ENCODE measurements at regions of chr2 and their contacts with region 1.

Region 1: DNA sequence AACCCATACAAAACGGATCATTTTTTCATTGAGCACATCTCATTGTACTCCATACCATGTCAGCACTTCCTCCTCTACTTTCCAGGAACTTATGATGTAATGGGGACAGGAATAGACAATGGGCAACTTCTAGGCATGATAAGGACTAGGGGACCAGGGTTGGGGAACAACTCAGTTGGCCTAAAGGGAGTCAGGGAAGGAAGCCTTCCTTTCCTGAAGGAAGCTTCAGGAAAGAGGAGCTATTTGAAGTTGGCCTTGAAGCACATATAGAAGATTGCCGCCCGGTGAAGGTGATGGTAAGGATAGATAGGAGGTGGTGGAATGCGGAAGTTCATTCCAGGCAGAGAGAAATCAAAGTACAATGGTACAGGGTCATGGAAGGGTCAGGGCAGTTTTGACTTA is 283.8 kb downstream of the SLC8A1 start:
- DNase-seq: peak; percentile 49 to 55
- H3K4me3 ChIP-seq: no peak overlapping the region
- H3K27ac ChIP-seq: no peak overlapping the region
- H3K4me1 ChIP-seq: 0 out of 2 replicates have a peak, but pooled peaks cover 8% of the 10 kb centered on the region
- H3K27me3 ChIP-seq: no peaks in the 10 kb centered on the region
- CTCF ChIP-seq: no peak

Region 2: DNA sequence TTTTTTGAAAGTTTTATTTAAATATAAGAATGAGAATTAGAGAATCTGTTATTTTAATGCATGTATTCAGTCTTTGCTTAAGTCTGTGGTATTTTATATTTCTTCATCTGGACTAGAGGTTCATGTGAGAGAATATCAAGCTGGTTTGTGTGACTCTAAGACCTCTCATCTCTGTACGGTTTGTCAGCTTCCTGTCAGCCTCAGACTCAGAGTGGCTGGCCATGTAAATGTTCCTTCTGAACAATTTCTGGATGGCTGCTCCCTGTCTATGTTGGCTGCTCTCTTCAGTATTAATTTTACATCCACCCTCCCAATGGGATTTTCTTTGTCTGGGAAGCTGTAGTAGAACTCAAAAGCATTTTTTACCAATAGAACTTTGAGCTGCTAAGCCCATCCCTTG is 163.7 kb before region 1 on chr2:
- CTCF ChIA-PET with region 1: no interaction called
- POLR2A ChIA-PET with region 1: no interaction called
- intact Hi-C with region 1: no loop called
- DNase-seq: no peak
- H3K4me3 ChIP-seq: no peak overlapping the region
- H3K27ac ChIP-seq: no peak overlapping the region
- H3K4me1 ChIP-seq: no peaks in the 10 kb centered on the region
- H3K27me3 ChIP-seq: no peaks in the 10 kb centered on the region
- CTCF ChIP-seq: no peak

Region 3: DNA sequence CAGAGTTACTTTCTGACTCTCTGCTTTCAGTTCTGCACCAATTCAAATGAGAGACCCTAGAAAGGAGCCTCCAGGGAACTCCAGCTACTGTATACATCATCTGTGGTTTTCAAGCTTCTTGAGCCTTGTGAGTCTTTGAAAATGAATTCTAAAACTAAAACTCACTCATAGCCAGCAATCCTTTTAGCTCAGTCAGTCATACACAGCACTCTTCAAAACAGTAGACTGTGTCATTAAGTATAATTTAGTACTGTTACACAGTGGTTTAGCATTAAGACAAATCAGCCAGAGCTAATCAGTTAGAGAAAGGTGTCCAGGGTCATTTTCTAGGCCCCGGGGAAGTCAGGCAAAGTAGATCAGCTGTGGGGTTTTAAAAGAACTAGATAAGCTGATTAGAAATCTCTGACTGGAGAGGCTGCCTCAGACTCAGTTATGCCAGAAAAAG is 66.9 kb before region 1 on chr2:
- CTCF ChIA-PET with region 1: no interaction called
- POLR2A ChIA-PET with region 1: no interaction called
- intact Hi-C with region 1: loop called (anchors 5 kb)
- DNase-seq: no peak
- H3K4me3 ChIP-seq: no peak overlapping the region
- H3K27ac ChIP-seq: no peak overlapping the region
- H3K4me1 ChIP-seq: peaks cover 12% of the 10 kb centered on the region
- H3K27me3 ChIP-seq: no peaks in the 10 kb centered on the region
- CTCF ChIP-seq: no peak

Region 4: GRCh38 chr2:40202798-40203400 is 34.9 kb after region 1 on chr2:
- CTCF ChIA-PET with region 1: no interaction called
- POLR2A ChIA-PET with region 1: no interaction called
- intact Hi-C with region 1: loop called (anchors 1 kb)
- DNase-seq: no peak
- H3K4me3 ChIP-seq: no peak overlapping the region
- H3K27ac ChIP-seq: no peak overlapping the region
- H3K4me1 ChIP-seq: no peaks in the 10 kb centered on the region
- H3K27me3 ChIP-seq: no peaks in the 10 kb centered on the region
- CTCF ChIP-seq: no peak